GM23248 (cell line): ENCODE measurements at regions of chr3 and their contacts with region 1.

Region 1: DNA sequence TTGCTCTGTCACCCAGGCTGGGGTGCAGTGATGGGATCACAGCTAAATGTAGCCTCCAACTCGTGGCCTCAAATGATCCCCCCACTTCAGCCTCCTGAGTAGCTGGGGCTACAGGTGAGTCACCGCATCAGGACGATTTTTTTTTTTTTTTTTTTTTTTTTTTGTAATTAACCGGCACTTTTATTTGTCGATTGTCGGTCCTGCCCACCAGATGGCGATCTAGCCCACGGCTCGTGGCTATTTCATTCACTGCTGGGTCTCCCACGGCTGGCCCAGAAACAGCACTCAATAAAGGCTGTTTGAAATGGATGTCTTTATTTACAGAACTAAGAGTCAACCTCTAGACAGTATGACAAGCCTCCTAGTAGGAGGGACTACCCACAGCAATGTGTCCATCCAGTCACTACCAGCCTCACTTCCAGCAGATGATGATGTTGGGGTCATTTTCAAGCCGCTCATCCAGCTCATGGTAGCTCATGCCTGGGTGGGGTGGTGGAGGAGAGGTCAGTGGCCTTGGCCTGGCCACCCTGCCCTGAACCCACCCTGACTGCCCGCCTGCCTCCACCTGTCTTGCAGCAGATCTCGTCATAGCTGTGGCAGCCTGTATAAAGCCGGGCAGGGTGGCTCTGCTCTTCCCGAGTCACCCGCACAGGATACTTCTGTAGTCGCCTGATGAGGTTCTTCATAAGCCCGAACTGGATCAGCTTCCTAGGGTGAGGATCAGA is 1.8 kb upstream of the ZMYND10 start:
- DNase-seq: peak; percentile 83
- H3K4me3 ChIP-seq: no peak overlapping the region
- H3K27ac ChIP-seq: peak overlapping the region; percentile 49; the same call in 1 of the 2 replicates
- H3K4me1 ChIP-seq: peaks cover 20% of the 10 kb centered on the region
- H3K27me3 ChIP-seq: no peaks in the 10 kb centered on the region

Region 2: DNA sequence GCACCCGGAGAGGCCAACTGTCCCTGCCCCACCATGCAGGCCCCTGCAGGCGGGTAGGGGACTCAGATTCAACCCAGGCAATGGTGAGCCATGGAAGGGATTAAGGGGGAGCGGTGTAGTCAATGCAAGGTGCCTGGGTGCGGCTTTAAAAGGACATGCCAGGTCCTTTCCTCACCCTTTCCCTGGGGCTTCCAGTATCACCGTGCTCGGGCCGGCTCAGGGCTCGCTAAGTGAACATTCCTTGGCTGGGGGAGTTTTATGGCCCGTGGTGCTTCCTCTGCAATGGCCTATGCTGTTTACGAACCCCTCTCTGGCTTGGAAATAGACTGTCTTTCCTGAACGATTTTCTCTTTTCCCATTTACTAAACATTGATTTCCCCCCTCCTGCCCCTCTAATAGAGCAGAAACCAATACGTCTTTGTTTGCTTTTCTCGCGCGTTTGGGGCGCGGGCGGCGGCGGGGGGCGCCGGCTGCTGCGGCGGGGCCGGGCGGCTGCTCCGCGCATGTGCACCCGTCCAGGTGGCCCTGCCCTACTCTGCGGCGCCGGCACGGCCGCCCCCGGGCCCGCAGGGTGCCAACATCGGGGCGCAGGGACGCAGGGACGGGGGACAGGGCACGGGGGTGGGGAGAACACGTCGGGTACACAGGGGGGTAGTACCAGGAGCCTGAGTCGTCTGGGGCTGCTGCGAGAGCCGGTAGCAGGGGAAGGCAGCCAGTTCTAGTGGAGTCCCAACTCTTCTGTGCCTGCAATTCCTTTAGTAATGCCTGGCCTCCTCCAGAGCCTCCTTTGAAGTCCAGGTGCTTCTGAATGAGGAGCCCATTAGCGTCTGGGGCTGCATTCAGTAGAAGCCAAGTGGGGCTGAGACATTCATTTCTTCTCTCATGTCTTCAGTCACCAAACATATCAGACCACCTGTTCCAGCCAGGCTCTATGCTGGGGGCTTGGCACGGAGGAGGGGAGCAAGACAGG is 182.9 kb after region 1 on chr3:
- in situ Hi-C with region 1: loop called (anchors 10 kb)
- DNase-seq: no peak
- H3K4me3 ChIP-seq: no peak overlapping the region
- H3K27ac ChIP-seq: no peak overlapping the region
- H3K4me1 ChIP-seq: no peaks in the 10 kb centered on the region
- H3K27me3 ChIP-seq: peaks cover 19% of the 10 kb centered on the region